Activated B cell treated with CpG ODN at 0.5 μM for 24 hours (primary cell): ENCODE measurements at regions of chr5 and their contacts with region 1.

Region 1: GRCh38 chr5:59790399-59791125 is 103.0 kb downstream of the PDE4D start:
- DNase-seq: no peak
- ATAC-seq: peak; percentile 90
- H3K4me3 Mint-ChIP-seq: peak overlapping the region; percentile 74
- H3K27ac Mint-ChIP-seq: peak overlapping the region; percentile 96
- H3K4me1 Mint-ChIP-seq: peaks cover 66% of the 10 kb centered on the region
- H3K27me3 Mint-ChIP-seq: no peaks in the 10 kb centered on the region
- CTCF ChIP-seq: no peak

Region 2: GRCh38 chr5:59126708-59127573 is 663.6 kb before region 1 on chr5:
- CTCF ChIA-PET with region 1: no interaction called
- POLR2A ChIA-PET with region 1: no interaction called
- intact Hi-C with region 1: loop called (anchors 2 kb)
- DNase-seq: no peak
- ATAC-seq: no peak
- H3K4me3 Mint-ChIP-seq: no peak overlapping the region
- H3K27ac Mint-ChIP-seq: no peak overlapping the region
- H3K4me1 Mint-ChIP-seq: peaks cover 7% of the 10 kb centered on the region
- H3K27me3 Mint-ChIP-seq: no peaks in the 10 kb centered on the region
- CTCF ChIP-seq: no peak

Region 3: DNA sequence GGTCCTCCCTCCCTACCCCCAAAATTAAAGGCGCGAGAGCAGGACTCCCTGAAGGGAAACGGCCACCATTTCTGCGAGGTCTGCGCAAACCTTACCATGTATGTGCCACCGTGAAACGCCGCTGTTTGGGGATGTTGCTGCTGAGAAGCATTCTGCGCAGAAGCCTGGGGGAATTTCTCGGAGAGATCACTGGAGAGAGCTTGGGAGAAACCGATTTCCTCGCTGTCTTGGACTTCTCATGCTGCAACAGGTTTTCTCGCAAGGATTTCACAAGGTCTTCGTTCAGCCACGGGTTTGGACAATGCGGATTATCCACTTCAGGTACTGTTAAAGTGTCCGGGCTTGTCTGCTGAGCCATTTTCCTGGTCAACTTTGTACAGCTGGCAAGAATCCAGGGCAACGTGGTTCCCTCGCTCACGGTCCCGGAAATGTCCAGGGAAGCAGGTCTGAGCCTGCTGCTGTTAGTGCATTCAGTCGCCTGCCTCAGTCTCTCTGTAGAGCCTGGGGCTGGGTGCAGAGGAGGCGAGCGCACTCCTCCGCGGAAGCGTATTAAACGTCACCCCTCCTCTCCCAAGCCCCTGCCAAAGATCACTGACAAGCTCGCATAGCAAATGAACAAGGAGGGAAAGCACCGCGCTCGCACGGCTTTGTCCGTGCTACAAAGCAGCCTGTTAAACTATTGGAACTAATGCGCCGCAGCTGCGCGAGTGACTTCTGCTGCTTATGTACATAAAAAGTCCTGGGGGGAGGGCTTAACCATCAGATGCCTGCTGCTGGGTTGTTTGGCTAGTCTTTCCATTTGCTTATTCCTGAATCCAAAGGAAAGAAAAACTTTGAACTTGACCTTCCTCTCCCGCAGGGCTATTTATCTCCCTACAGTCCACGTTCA is 22.2 kb before region 1 on chr5:
- CTCF ChIA-PET with region 1: no interaction called
- POLR2A ChIA-PET with region 1: interaction called, 12 read pairs
- intact Hi-C with region 1: loop called (anchors 1 kb)
- DNase-seq: peak; percentile 31
- ATAC-seq: peak; percentile 88
- H3K4me3 Mint-ChIP-seq: peak overlapping the region; percentile 91
- H3K27ac Mint-ChIP-seq: peak overlapping the region; percentile 79
- H3K4me1 Mint-ChIP-seq: peaks cover 55% of the 10 kb centered on the region
- H3K27me3 Mint-ChIP-seq: peaks cover 7% of the 10 kb centered on the region
- CTCF ChIP-seq: no peak